Spleen (tissue), 13 donors: ENCODE measurements at regions of chr20 and their contacts with region 1.

Region 1: DNA sequence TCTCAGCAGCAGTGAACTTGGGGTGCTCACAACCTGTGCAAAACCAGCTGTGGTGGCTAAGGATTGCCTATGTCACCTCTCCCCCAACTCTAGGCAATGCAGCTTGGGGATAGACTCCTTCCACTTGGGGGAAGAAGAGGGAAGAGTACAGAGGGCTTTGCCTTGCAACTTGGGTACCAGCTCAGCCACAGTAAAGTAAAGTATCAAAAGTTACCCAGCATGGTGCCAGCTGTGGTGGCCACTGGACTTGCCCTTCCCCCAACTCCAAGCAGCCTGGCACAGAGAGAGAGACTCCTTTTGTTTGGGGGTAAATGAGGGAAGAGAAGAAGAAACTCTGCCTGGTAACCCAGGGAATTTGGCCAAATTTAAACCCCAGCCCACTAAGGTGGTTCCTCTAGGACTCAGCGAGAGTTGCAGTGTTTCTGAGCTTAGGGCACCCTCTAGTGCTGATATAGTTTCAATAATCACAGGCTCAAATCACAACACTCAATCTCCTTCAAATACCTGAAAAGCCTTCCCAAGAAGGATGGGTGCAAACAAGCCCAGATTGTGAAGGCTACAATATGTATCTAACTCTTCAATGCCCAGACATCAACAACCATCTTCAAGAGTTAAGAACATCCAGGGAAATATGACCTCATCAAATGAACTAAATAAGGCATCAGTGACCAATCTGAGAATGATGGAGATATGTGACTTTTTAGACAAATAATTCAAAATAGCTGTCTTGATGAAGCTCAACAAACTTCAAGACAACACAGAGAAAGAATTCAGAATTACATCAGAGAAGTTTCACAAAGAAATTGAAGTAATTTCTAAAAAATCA is 7.6 kb upstream of the DEFB129 start:
- DNase-seq: no peak
- H3K4me3 ChIP-seq: no peak overlapping the region
- H3K27ac ChIP-seq: no peak overlapping the region
- H3K4me1 ChIP-seq: no peaks in the 10 kb centered on the region
- H3K27me3 ChIP-seq: peaks cover 0 to 45% (median 6%) of the 10 kb centered on the region in 7 donors
- CTCF ChIP-seq: peak in 1 of 11 experiments; percentile 16
- POLR2A ChIP-seq: no peak

Region 2: GRCh38 chr20:145877-146276 is 73.6 kb before region 1 on chr20:
- intact Hi-C with region 1: loop called (anchors 2 kb)
- DNase-seq: no peak
- H3K4me3 ChIP-seq: no peak overlapping the region
- H3K27ac ChIP-seq: no peak overlapping the region
- H3K4me1 ChIP-seq: no peaks in the 10 kb centered on the region
- H3K27me3 ChIP-seq: peaks cover 0 to 49% (median 0%) of the 10 kb centered on the region in 7 donors
- CTCF ChIP-seq: no peak
- POLR2A ChIP-seq: no peak